Activated CD8-positive, alpha-beta T cell treated with anti-CD3 and anti-CD28 coated beads for 36 hours (primary cell): ENCODE measurements at regions of chr17 and their contacts with region 1.

Region 1: DNA sequence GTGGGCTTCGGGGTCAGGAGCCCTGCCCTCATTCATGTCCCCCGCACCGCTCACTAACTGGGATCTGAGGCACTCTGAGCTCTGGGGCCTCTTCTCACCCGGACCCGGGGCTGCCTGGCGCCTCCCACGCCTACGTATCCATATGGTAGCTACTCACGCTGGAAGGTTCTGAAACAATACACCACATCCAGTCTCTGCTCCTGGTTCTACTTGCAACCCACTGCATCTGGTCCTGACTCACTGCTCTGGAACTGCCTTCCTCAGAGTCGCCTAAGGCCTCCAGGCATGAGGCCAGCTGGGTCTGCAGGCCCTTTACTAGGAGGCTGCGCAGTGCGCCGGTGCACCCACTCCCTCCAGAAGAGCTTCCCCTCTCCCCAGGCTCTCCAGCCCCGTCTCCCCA is 18.1 kb downstream of the USP36 start:
- DNase-seq: no peak
- ATAC-seq: no peak
- H3K4me3 Mint-ChIP-seq: no peak overlapping the region
- H3K27ac Mint-ChIP-seq: peak overlapping the region; percentile 44
- H3K4me1 Mint-ChIP-seq: peaks cover 52% of the 10 kb centered on the region
- H3K27me3 Mint-ChIP-seq: no peaks in the 10 kb centered on the region
- CTCF ChIP-seq: no peak

Region 2: DNA sequence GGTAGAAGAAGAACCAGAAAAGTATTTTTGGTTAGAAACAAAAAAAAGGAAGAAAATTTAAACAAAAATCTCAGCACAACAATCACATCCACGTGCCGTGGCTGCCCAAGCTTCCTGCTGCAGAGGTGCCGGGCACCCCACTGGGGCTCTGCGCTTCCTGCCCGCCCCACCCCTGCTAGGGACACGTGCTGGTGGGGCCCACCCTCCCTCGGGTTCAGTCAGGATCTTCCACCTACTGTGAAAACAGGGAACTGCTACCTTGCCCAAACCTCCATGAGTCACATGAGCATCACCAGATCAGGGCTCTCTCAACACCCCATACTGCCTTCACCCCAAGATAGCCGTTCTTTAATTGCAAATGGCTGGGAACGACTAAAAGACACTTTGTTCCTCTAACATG is 16.1 kb before region 1 on chr17:
- CTCF ChIA-PET with region 1: interaction called, 4 read pairs
- POLR2A ChIA-PET with region 1: interaction called, 18 read pairs
- intact Hi-C with region 1: no loop called
- DNase-seq: peak; percentile 71
- ATAC-seq: peak; percentile 55
- H3K4me3 Mint-ChIP-seq: no peak overlapping the region
- H3K27ac Mint-ChIP-seq: peak overlapping the region; percentile 86
- H3K4me1 Mint-ChIP-seq: peaks cover 41% of the 10 kb centered on the region
- H3K27me3 Mint-ChIP-seq: no peaks in the 10 kb centered on the region
- CTCF ChIP-seq: no peak

Region 3: GRCh38 chr17:78840725-78841611 is 18.4 kb after region 1 on chr17 and contains the start of gene USP36:
- CTCF ChIA-PET with region 1: interaction called, 3 read pairs
- POLR2A ChIA-PET with region 1: interaction called, 14 read pairs
- intact Hi-C with region 1: no loop called
- DNase-seq: peak; percentile 100
- ATAC-seq: peak; percentile 88
- H3K4me3 Mint-ChIP-seq: peak within 1 kb of the TSS; percentile 87
- H3K27ac Mint-ChIP-seq: peak within 1 kb of the TSS; percentile 95
- H3K4me1 Mint-ChIP-seq: peaks cover 33% of the 10 kb centered on the region
- H3K27me3 Mint-ChIP-seq: no peaks in the 10 kb centered on the region
- CTCF ChIP-seq: no peak
- total RNA-seq, gene USP36: 86.3 to 93.2 TPM

Region 4: GRCh38 chr17:78890498-78890897 is 67.9 kb after region 1 on chr17:
- CTCF ChIA-PET with region 1: no interaction called
- POLR2A ChIA-PET with region 1: no interaction called
- intact Hi-C with region 1: no loop called
- DNase-seq: peak; percentile 79
- ATAC-seq: peak; percentile 84
- H3K4me3 Mint-ChIP-seq: peak overlapping the region; percentile 28
- H3K27ac Mint-ChIP-seq: peak overlapping the region; percentile 65
- H3K4me1 Mint-ChIP-seq: peaks cover 29% of the 10 kb centered on the region
- H3K27me3 Mint-ChIP-seq: no peaks in the 10 kb centered on the region
- CTCF ChIP-seq: no peak